H1 (cell line): ENCODE measurements at regions of chr21 and their contacts with region 1.

Region 1: DNA sequence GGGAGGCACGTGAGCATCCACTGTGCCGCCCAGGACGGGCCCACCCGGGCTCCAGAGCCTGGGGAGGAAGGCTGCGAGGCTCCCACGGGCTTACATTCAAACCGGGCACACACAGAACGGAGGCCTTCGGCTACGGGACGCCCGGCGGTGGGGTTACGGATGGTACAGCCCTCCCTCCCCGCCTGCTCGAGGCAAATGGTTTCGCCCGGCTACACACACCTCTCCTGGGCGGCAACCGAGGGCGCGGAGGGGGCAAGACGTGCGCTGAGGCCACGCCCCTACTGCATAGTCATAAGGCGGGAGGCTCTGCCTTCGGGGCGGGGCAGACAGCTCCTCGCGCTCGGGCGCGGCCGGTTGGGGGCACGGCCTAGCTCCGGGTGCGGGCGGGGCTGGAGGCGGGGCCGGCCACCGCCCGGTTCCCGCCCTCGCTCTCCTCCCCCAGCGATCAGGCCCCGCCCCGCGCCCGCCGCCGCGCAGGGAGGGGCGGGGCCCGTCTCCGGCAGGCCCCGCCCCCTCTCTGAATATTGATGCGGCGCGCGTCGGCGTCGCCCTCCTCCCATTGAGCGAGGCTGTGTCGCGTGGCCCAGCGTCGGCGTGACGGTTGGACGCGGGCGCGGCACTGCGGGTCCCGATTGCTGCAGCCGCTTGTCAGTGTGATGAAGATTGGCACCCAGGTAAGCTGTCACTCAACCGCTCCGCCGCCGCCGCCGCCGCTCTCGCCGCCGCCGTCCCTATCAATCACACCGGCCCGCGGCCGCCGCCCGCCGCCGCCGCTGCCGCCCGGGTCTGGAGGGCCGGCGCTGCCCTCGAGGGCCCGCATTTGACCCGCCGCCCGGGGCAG is at the start of gene PKNOX1:
- DNase-seq: peak; percentile 98
- H3K4me3 ChIP-seq: peak within 1 kb of the TSS; percentile 78 to 90 (median 83)
- H3K27ac ChIP-seq: peak within 1 kb of the TSS; percentile 88
- H3K4me1 ChIP-seq: peaks cover 8 to 30% (median 13%) of the 10 kb centered on the region in 4 experiments
- H3K27me3 ChIP-seq: no peaks in the 10 kb centered on the region
- CTCF ChIP-seq: no peak
- EP300 ChIP-seq: peak in 1 of 2 experiments; percentile 100; a peak in 2 of 3 replicates
- POLR2A ChIP-seq: no peak
- RAD21 ChIP-seq: peak in 1 of 2 experiments; percentile 7; a peak in 1 of 4 replicates
- total RNA-seq, gene PKNOX1: 31.3 and 31.9 TPM in 2 replicates

Region 2: DNA sequence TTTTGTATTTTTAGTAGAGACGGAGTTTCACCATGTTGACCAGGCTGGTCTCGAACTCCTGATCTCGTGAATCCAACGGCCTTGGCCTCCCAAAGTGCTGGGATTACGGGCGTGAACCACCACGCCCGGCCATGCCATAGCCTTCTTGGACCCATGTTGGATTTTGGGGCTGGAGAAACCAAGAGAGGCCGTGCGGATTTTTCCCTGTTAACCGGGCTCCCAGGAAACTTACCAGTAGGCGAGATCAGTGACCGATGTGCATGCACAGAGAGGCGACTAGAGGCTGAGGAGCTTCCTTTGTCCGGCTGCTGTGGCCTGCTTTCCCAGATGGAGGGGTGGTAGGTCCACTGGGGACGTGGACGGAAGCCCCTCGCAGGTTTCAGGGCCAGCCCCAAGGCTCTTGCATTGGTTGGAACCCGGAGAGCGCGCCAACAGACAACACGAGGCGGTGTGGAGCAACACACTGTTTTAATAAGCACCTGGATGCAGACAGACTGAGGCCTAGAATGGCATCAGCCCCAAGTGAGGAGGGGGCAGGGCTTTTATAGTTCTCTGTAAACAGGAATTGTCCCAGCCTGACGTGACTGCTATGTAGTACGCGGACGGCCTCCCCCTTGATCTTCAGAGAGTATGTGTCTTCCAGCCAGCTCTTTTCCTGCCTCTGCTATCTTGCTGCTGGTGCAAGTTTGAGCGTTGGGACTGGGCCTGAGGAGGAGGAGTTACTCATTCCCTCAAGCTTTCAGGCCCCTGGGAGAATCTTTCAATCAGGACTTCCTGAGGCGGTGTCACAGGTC is 48.9 kb before region 1 on chr21 and contains the start of gene ERVH48-1:
- CTCF ChIA-PET with region 1: no interaction called
- POLR2A ChIA-PET with region 1: interaction called, 10 read pairs
- DNase-seq: no peak
- H3K4me3 ChIP-seq: peak within 1 kb of the TSS in 2 of 4 experiments; percentile 15 to 19; a peak in 3 of 8 replicates
- H3K27ac ChIP-seq: peak within 1 kb of the TSS; percentile 62; the same call in 1 of the 2 replicates
- H3K4me1 ChIP-seq: peaks cover 11 to 18% (median 14%) of the 10 kb centered on the region in 4 experiments
- H3K27me3 ChIP-seq: no peaks in the 10 kb centered on the region
- CTCF ChIP-seq: no peak
- EP300 ChIP-seq: no peak
- POLR2A ChIP-seq: peak in 1 of 2 experiments; percentile 44; a peak in 1 of 3 replicates
- RAD21 ChIP-seq: no peak
- total RNA-seq, gene ERVH48-1: 14.9 and 17.7 TPM in 2 replicates

Region 3: DNA sequence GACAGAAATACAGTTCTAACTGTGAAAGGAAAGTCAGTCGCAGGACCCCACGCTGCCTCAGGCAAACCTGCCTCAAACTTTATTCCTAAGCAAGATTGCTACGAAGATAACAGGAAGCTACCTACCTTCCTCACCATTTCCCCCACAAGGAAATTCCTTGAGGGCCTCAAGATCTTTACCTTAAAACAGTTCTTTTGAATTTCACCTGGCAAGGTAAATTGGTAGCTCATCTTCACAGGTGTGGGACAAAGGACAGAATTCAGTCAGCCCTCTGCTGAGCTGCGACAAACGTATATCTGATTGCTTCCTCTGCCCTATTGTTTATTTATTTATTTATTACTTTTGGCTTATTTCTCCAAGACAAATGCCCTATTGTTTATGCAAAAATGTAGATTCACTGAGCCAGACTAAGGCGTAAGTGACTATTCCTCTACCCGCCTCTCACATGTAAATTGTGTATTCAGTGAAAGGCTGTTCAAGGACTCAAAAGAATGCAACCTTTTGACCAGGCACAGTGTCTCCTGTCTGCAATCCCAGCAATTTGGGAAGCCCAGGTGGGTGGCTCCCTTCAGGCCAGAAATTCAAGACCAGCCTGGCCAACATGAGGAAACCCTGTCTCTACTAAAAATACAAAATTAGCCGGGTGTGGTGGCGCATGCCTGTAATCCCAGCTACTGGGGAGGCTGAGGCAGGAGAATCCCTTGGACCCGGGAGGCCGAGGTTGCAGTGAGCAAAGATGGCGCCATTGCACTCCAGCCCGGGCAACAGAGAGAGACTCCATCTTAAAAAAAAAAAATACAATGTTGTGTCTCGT is 17.2 kb before region 1 on chr21:
- CTCF ChIA-PET with region 1: interaction called, 4 read pairs
- POLR2A ChIA-PET with region 1: interaction called, 22 read pairs
- DNase-seq: peak; percentile 67 to 82
- H3K4me3 ChIP-seq: peak overlapping the region in 1 of 4 experiments; percentile 26; a peak in 1 of 8 replicates
- H3K27ac ChIP-seq: peak overlapping the region; percentile 86
- H3K4me1 ChIP-seq: peaks cover 9 to 25% (median 17%) of the 10 kb centered on the region in 4 experiments
- H3K27me3 ChIP-seq: no peaks in the 10 kb centered on the region
- CTCF ChIP-seq: no peak
- EP300 ChIP-seq: peak in 1 of 2 experiments; percentile 9; a peak in 1 of 3 replicates
- POLR2A ChIP-seq: no peak; a peak in 1 of 3 replicates
- RAD21 ChIP-seq: no peak

Region 4: GRCh38 chr21:42991992-42992740 is 18.0 kb after region 1 on chr21:
- CTCF ChIA-PET with region 1: interaction called, 4 read pairs
- POLR2A ChIA-PET with region 1: interaction called, 112 read pairs
- DNase-seq: no peak
- H3K4me3 ChIP-seq: no peak overlapping the region
- H3K27ac ChIP-seq: 0 out of 2 replicates have a peak overlapping the region, but pooled peaks have one; percentile 9
- H3K4me1 ChIP-seq: peaks cover 0 to 4% (median 0%) of the 10 kb centered on the region in 4 experiments; a peak in 2 of 7 replicates
- H3K27me3 ChIP-seq: no peaks in the 10 kb centered on the region
- CTCF ChIP-seq: no peak
- EP300 ChIP-seq: no peak
- POLR2A ChIP-seq: no peak
- RAD21 ChIP-seq: no peak